Activated CD4-positive, alpha-beta memory T cell treated with anti-CD3 and anti-CD28 coated beads for 36 hours (primary cell): ENCODE measurements at regions of chr10 and their contacts with region 1.

Region 1: GRCh38 chr10:133124357-133125211 is 35.4 kb upstream of the KNDC1 start:
- DNase-seq: peak; percentile 42
- H3K4me3 Mint-ChIP-seq: no peak overlapping the region
- H3K27ac Mint-ChIP-seq: no peak overlapping the region
- H3K4me1 Mint-ChIP-seq: peaks cover 11% of the 10 kb centered on the region
- H3K27me3 Mint-ChIP-seq: peaks cover 19% of the 10 kb centered on the region

Region 2: GRCh38 chr10:132836832-132837540 is 287.6 kb before region 1 on chr10:
- CTCF ChIA-PET with region 1: no interaction called
- POLR2A ChIA-PET with region 1: no interaction called
- intact Hi-C with region 1: loop called (anchors 5 kb)
- DNase-seq: peak; percentile 49
- H3K4me3 Mint-ChIP-seq: no peak overlapping the region
- H3K27ac Mint-ChIP-seq: no peak overlapping the region
- H3K4me1 Mint-ChIP-seq: no peaks in the 10 kb centered on the region
- H3K27me3 Mint-ChIP-seq: peaks cover 6% of the 10 kb centered on the region

Region 3: GRCh38 chr10:132904181-132904819 is 220.3 kb before region 1 on chr10:
- CTCF ChIA-PET with region 1: interaction called, 15 read pairs
- POLR2A ChIA-PET with region 1: no interaction called
- intact Hi-C with region 1: loop called (anchors 2 kb)
- DNase-seq: peak; percentile 60
- H3K4me3 Mint-ChIP-seq: no peak overlapping the region
- H3K27ac Mint-ChIP-seq: no peak overlapping the region
- H3K4me1 Mint-ChIP-seq: peaks cover 13% of the 10 kb centered on the region
- H3K27me3 Mint-ChIP-seq: no peaks in the 10 kb centered on the region

Region 4: GRCh38 chr10:132939957-132940790 is 184.4 kb before region 1 on chr10:
- CTCF ChIA-PET with region 1: interaction called, 6 read pairs
- POLR2A ChIA-PET with region 1: no interaction called
- intact Hi-C with region 1: loop called (anchors 1 kb)
- DNase-seq: peak; percentile 71
- H3K4me3 Mint-ChIP-seq: no peak overlapping the region
- H3K27ac Mint-ChIP-seq: no peak overlapping the region
- H3K4me1 Mint-ChIP-seq: peaks cover 11% of the 10 kb centered on the region
- H3K27me3 Mint-ChIP-seq: peaks cover 44% of the 10 kb centered on the region

Region 5: GRCh38 chr10:133212853-133213494 is 88.4 kb after region 1 on chr10:
- CTCF ChIA-PET with region 1: no interaction called
- POLR2A ChIA-PET with region 1: no interaction called
- intact Hi-C with region 1: no loop called
- DNase-seq: no peak
- H3K4me3 Mint-ChIP-seq: no peak overlapping the region
- H3K27ac Mint-ChIP-seq: no peak overlapping the region
- H3K4me1 Mint-ChIP-seq: peaks cover 4% of the 10 kb centered on the region
- H3K27me3 Mint-ChIP-seq: no peaks in the 10 kb centered on the region